ENCODE measurements at regions of chr6 and their contacts with region 1.

Region 1: GRCh38 chr6:43383021-43383667 is 13.7 kb upstream of the ZNF318 start:
- DNase-seq: no peak
- ATAC-seq: no peak
- H3K4me3 Mint-ChIP-seq: peak overlapping the region; percentile 55
- H3K27ac Mint-ChIP-seq: peak overlapping the region; percentile 94
- H3K4me1 Mint-ChIP-seq: peaks cover 41% of the 10 kb centered on the region
- H3K27me3 Mint-ChIP-seq: peaks cover 6% of the 10 kb centered on the region
- CTCF ChIP-seq: no peak

Region 2: DNA sequence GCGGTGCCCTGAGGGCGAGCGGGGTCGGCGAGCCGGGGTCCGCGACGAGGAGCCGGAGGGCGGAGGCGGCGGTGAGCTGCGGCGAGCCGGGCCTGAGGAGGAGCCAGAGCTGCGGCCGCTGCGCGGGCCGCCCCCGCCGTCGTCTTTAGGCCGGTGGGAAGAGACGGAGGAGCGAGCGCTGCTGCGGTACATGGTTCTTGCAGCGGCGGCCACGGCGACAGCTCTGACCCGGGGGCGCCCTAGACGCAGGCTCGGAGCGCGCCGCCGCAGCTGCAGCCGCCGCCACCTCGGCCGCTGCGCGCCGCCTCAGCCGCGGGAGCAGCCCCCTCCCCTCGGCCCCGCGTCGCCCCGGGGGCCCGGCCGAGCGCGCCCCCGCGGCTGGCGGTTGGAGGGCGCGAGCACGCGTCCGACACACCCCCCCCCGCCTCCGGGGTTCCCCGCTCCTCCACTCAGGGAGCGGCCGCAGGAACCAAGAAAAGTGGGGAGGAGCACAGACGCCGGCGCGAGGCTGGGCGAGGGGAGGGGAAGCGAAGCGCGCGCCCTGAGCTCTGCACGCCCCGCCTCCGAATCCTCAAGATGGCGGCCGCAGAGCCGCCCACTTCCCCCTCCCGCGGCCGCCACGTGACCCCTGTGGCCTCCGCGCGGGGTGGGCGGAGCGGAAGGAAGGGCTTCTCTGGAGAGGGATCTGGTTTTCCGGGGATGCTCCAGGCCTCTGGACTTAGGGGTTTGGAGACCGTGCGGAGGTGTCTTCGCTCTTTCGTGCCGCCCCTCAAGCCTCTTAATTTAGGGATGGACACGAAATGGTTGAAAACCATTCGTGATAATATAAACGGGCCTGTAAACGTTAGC is 13.7 kb before region 1 on chr6 and contains the start of gene ZNF318:
- CTCF ChIA-PET with region 1: interaction called, 9 read pairs
- POLR2A ChIA-PET with region 1: interaction called, 27 read pairs
- intact Hi-C with region 1: no loop called
- DNase-seq: peak; percentile 95
- ATAC-seq: peak; percentile 97
- H3K4me3 Mint-ChIP-seq: peak within 1 kb of the TSS; percentile 84
- H3K27ac Mint-ChIP-seq: peak within 1 kb of the TSS; percentile 97
- H3K4me1 Mint-ChIP-seq: peaks cover 30% of the 10 kb centered on the region
- H3K27me3 Mint-ChIP-seq: no peaks in the 10 kb centered on the region
- CTCF ChIP-seq: no peak
- total RNA-seq, gene ZNF318: 13.1 to 13.5 TPM

Region 3: DNA sequence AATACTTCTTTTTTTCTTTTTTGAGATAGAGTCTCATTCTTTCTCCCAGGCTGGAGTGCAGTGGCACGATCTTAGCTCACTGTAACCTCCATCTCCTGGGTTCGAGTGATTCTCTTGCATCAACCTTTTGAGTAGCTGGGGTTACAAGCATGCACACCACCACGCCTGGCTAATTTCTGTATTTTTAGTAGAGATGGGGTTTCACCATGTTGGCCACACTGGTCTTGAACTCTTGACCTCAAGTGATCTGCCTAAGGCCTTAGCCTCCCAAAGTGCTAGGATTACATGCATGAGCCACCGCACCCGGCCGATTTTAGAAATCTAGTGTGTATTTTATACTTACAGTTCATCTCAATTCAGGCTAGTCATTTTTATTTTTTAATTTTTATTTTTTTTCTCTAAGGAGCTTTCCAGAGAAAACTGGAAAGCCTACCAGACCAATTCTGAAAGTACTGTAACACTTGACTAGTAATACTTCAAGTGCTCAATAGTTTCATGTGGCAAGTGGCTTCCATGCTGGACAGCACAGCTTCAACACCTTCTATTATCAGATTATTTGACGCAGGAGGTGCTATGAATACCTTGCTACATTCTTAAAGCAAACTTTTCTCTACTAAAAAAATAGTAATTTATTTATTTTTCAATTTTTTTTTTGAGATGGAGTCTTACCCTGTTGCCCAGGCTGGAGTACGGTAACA is 158.8 kb after region 1 on chr6:
- CTCF ChIA-PET with region 1: no interaction called
- POLR2A ChIA-PET with region 1: no interaction called
- intact Hi-C with region 1: no loop called
- DNase-seq: no peak
- ATAC-seq: no peak
- H3K4me3 Mint-ChIP-seq: no peak overlapping the region
- H3K27ac Mint-ChIP-seq: peak overlapping the region; percentile 25
- H3K4me1 Mint-ChIP-seq: no peaks in the 10 kb centered on the region
- H3K27me3 Mint-ChIP-seq: no peaks in the 10 kb centered on the region
- CTCF ChIP-seq: no peak

Region 4: GRCh38 chr6:43584892-43585570 is 201.9 kb after region 1 on chr6:
- CTCF ChIA-PET with region 1: no interaction called
- POLR2A ChIA-PET with region 1: no interaction called
- intact Hi-C with region 1: no loop called
- DNase-seq: peak; percentile 18
- ATAC-seq: peak; percentile 53
- H3K4me3 Mint-ChIP-seq: no peak overlapping the region
- H3K27ac Mint-ChIP-seq: peak overlapping the region; percentile 47
- H3K4me1 Mint-ChIP-seq: peaks cover 25% of the 10 kb centered on the region
- H3K27me3 Mint-ChIP-seq: no peaks in the 10 kb centered on the region
- CTCF ChIP-seq: no peak

Measured in activated CD8-positive, alpha-beta T cell treated with anti-CD3 and anti-CD28 coated beads for 36 hours (primary cell).